Activated CD4-positive, alpha-beta T cell treated with anti-CD3 and anti-CD28 coated beads for 36 hours (primary cell): ENCODE measurements at regions of chr19 and their contacts with region 1.

Region 1: GRCh38 chr19:1478934-1479707 is at the start of gene C19orf25:
- DNase-seq: peak; percentile 97
- ATAC-seq: peak; percentile 98
- H3K4me3 Mint-ChIP-seq: peak within 1 kb of the TSS; percentile 96
- H3K27ac Mint-ChIP-seq: peak within 1 kb of the TSS; percentile 95
- H3K4me1 Mint-ChIP-seq: peaks cover 6% of the 10 kb centered on the region
- H3K27me3 Mint-ChIP-seq: no peaks in the 10 kb centered on the region
- total RNA-seq, gene C19orf25: 19.9 to 26.9 TPM

Region 2: DNA sequence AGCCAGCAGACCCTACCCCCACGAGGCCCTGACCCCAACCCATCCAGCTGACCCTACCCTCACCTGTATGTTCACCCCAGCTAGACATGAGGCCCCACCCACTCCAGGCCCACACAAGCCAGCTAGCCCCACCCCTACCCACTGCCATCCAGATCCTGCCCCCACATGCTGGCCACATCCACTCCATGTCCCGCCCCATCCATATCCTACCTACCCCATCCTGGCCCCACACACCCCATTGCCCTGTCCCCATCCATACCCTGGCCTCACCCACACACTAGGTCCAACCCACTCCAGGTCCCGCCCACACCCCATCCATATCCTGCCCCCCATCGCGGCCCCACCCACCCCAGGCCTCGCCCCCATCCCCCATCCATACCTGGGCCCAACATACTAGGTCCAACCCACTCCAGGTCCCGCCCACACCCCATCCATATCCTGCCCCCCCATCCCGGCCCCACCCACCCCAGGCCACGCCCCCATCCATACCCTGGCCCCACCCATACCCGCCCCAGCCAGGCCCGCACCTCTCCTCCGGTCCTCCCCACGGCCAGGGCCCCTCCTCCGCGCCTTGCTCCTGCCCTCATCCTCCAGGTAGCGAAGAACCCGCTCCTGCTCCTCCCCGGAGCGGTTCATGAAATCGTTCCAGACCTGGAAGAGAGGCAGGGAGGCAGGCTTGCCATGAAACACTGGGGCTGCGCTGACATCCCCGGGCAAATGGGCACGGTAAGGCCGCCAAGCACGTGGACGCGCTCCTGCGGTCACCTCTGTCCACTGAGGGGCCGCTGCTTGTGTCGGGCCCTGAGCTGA is 578.6 kb before region 1 on chr19:
- CTCF ChIA-PET with region 1: no interaction called
- POLR2A ChIA-PET with region 1: no interaction called
- intact Hi-C with region 1: no loop called
- DNase-seq: peak; percentile 67
- ATAC-seq: peak; percentile 54
- H3K4me3 Mint-ChIP-seq: no peak overlapping the region
- H3K27ac Mint-ChIP-seq: no peak overlapping the region
- H3K4me1 Mint-ChIP-seq: peaks cover 18% of the 10 kb centered on the region
- H3K27me3 Mint-ChIP-seq: no peaks in the 10 kb centered on the region

Region 3: DNA sequence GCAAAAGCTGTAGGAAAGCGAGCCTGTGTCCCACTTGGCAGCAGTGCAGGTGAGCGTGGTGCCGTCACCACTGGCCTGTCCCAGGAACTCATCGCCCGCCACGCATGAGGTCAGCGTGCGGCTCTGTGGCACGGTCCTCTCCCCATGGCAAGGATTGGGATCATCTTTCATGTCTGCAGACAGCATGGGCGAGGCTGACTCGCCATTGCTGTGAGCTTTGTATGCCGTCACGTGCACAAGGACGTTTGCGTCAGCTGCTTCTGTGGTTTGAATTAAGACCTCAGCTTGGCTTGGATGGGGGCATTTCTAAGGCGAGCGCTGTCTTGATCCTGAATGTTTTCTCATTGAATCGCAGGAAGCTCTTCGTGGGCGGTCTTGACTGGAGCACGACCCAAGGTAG is 62.0 kb before region 1 on chr19:
- CTCF ChIA-PET with region 1: no interaction called
- POLR2A ChIA-PET with region 1: no interaction called
- intact Hi-C with region 1: no loop called
- DNase-seq: no peak
- ATAC-seq: no peak
- H3K4me3 Mint-ChIP-seq: no peak overlapping the region
- H3K27ac Mint-ChIP-seq: no peak overlapping the region
- H3K4me1 Mint-ChIP-seq: peaks cover 44% of the 10 kb centered on the region
- H3K27me3 Mint-ChIP-seq: no peaks in the 10 kb centered on the region

Region 4: DNA sequence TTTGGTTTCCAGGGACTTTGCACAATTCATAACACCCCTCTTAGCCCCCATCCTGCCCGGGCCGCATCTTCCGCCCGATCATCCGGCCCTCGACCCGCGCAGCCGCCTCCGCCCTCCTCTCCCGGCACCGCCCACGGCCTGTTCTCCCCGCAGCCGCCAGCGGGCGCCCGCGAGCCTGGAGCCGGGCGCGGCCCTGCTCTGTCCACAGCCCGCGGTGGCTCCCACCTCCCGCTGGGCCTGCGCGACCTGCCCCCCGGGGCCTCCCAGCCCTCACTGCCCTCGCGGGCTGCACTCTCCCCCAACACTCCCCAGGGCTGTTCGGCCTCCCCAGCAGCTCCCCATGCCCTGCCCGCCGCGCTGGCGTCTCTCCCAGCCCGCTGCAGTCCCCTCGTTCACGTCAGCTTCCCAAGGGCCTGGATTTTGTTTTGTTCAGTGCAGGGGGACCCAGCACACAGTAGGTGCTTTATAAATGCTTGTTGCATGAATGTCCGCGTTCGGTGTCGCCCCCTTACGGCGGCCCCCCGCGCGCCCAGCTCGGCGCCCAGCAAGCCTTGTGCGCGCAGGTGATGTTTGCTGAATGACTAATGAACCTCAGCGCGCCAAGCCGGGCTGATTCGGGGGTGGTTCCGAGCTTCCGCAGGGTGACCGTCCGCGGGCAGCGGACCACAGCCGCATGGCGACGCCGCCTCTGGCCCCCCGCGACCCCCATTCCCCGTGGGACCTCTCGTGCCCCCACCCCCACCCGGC is 33.8 kb before region 1 on chr19:
- CTCF ChIA-PET with region 1: interaction called, 7 read pairs
- POLR2A ChIA-PET with region 1: no interaction called
- intact Hi-C with region 1: loop called in 1 of 2 experiments (anchors 5 kb)
- DNase-seq: peak; percentile 89
- ATAC-seq: peak; percentile 82
- H3K4me3 Mint-ChIP-seq: peak overlapping the region; percentile 49
- H3K27ac Mint-ChIP-seq: no peak overlapping the region
- H3K4me1 Mint-ChIP-seq: peaks cover 30% of the 10 kb centered on the region
- H3K27me3 Mint-ChIP-seq: peaks cover 22% of the 10 kb centered on the region

Region 5: GRCh38 chr19:1507763-1508509 is 28.8 kb after region 1 on chr19:
- CTCF ChIA-PET with region 1: no interaction called
- POLR2A ChIA-PET with region 1: no interaction called
- intact Hi-C with region 1: loop called in 1 of 2 experiments (anchors 1 kb)
- DNase-seq: peak; percentile 95
- ATAC-seq: peak; percentile 87
- H3K4me3 Mint-ChIP-seq: peak overlapping the region; percentile 73
- H3K27ac Mint-ChIP-seq: peak overlapping the region; percentile 88
- H3K4me1 Mint-ChIP-seq: peaks cover 16% of the 10 kb centered on the region
- H3K27me3 Mint-ChIP-seq: no peaks in the 10 kb centered on the region

Region 6: GRCh38 chr19:1568320-1569019 is 89.3 kb after region 1 on chr19 and contains the start of gene MEX3D:
- CTCF ChIA-PET with region 1: no interaction called
- POLR2A ChIA-PET with region 1: no interaction called
- intact Hi-C with region 1: loop called in 1 of 2 experiments (anchors 2 kb)
- DNase-seq: peak; percentile 90
- ATAC-seq: peak; percentile 88
- H3K4me3 Mint-ChIP-seq: no peak within 1 kb of the TSS
- H3K27ac Mint-ChIP-seq: no peak within 1 kb of the TSS
- H3K4me1 Mint-ChIP-seq: no peaks in the 10 kb centered on the region
- H3K27me3 Mint-ChIP-seq: peaks cover 7% of the 10 kb centered on the region
- total RNA-seq, gene MEX3D: 6.2 to 6.7 TPM

Region 7: GRCh38 chr19:1605236-1606137 is 126.4 kb after region 1 on chr19 and contains the start of gene UQCR11:
- CTCF ChIA-PET with region 1: interaction called, 3 read pairs
- POLR2A ChIA-PET with region 1: no interaction called
- intact Hi-C with region 1: loop called in 1 of 2 experiments (anchors 1 kb)
- DNase-seq: peak; percentile 96
- ATAC-seq: peak; percentile 89
- H3K4me3 Mint-ChIP-seq: peak within 1 kb of the TSS; percentile 97
- H3K27ac Mint-ChIP-seq: peak within 1 kb of the TSS; percentile 99
- H3K4me1 Mint-ChIP-seq: peaks cover 52% of the 10 kb centered on the region
- H3K27me3 Mint-ChIP-seq: no peaks in the 10 kb centered on the region
- total RNA-seq, gene UQCR11: 152 to 226 TPM